ENCODE measurements at regions of chr20 and their contacts with region 1.

Region 1: GRCh38 chr20:38875175-38875993 is 50.8 kb upstream of the FAM83D start:
- DNase-seq: peak; percentile 73
- H3K4me3 Mint-ChIP-seq: peak overlapping the region; percentile 69
- H3K27ac Mint-ChIP-seq: peak overlapping the region; percentile 94
- H3K4me1 Mint-ChIP-seq: peaks cover 88% of the 10 kb centered on the region
- H3K27me3 Mint-ChIP-seq: no peaks in the 10 kb centered on the region

Region 2: GRCh38 chr20:38498909-38499308 is 376.5 kb before region 1 on chr20:
- CTCF ChIA-PET with region 1: no interaction called
- POLR2A ChIA-PET with region 1: no interaction called
- intact Hi-C with region 1: no loop called
- DNase-seq: no peak
- H3K4me3 Mint-ChIP-seq: no peak overlapping the region
- H3K27ac Mint-ChIP-seq: no peak overlapping the region
- H3K4me1 Mint-ChIP-seq: no peaks in the 10 kb centered on the region
- H3K27me3 Mint-ChIP-seq: no peaks in the 10 kb centered on the region

Region 3: DNA sequence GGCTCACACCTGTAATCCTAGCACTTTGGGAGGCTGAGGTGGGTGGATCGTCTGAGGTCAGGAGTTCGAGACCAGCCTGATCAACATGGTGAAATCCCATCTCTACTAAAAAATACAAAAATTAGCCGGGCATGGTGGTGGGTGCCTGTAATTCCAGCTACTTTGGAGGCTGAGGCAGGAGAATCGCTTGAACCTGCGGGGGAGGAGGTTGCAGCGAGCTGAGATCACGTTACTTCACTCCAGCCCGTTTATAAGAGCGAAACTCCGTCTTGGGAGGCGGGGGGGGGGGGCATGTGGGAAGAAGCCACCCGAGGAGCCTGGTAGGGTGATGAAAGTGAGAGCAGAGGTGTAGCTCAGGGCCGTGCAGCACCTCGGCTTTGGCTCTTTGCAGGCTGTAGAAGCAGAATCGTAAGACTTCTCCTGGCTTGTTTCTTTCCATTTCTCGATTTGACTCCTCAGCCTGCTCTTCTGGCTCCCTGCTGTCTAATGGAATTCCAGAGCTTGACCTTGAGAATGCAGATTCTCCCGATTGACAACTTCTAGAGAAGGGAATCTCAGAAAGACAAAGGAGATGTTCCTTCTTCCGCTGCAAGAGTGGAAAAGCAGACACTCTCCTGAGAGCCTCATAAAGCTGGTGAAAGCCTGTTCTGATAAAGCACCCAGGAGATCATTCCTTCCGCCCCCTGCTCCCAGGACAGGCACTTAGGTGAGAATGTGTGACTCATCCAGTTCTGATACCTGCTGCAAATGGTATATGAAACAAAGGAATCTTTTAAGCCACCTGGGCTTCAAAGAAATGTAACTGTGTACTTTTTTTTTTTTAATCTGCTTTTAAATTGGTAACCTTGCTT is 95.9 kb before region 1 on chr20:
- CTCF ChIA-PET with region 1: no interaction called
- POLR2A ChIA-PET with region 1: no interaction called
- intact Hi-C with region 1: no loop called
- DNase-seq: peak; percentile 31
- H3K4me3 Mint-ChIP-seq: peak overlapping the region; percentile 27
- H3K27ac Mint-ChIP-seq: peak overlapping the region; percentile 19
- H3K4me1 Mint-ChIP-seq: peaks cover 11% of the 10 kb centered on the region
- H3K27me3 Mint-ChIP-seq: no peaks in the 10 kb centered on the region

Region 4: DNA sequence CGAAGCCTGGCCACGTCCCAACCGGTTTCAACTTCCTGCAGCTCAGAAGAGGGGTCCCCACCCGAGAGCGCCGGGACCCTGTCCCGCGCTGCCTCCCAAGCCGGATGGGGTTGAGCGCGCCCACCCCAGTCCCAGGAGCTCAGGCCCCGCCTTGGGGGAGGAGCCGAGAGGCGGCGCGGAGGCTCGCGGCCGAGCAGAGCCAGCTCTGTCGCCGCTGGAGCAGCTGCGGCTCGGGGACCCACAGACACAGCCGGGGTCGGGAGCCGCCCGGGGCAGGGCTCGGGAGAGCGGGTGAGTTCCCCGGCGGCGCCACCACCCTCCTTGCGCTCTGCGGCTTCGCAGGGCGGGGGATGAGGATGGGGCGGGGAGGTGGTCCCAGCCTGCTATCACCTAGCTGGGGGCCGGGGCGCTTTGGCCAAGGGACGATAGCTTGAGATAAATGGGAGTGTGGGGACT is 69.9 kb before region 1 on chr20 and contains the start of gene PPP1R16B:
- CTCF ChIA-PET with region 1: interaction called, 7 read pairs
- POLR2A ChIA-PET with region 1: interaction called, 36 read pairs
- intact Hi-C with region 1: loop called (anchors 1 kb)
- DNase-seq: peak; percentile 85
- H3K4me3 Mint-ChIP-seq: peak within 1 kb of the TSS; percentile 86
- H3K27ac Mint-ChIP-seq: peak within 1 kb of the TSS; percentile 96
- H3K4me1 Mint-ChIP-seq: peaks cover 51% of the 10 kb centered on the region
- H3K27me3 Mint-ChIP-seq: no peaks in the 10 kb centered on the region
- total RNA-seq, gene PPP1R16B: 111 to 114 TPM

Region 5: GRCh38 chr20:38833857-38834164 is 41.6 kb before region 1 on chr20:
- CTCF ChIA-PET with region 1: interaction called, 4 read pairs
- POLR2A ChIA-PET with region 1: interaction called, 5 read pairs
- intact Hi-C with region 1: loop called (anchors 1 kb)
- DNase-seq: peak; percentile 72
- H3K4me3 Mint-ChIP-seq: peak overlapping the region; percentile 43
- H3K27ac Mint-ChIP-seq: peak overlapping the region; percentile 92
- H3K4me1 Mint-ChIP-seq: peaks cover 80% of the 10 kb centered on the region
- H3K27me3 Mint-ChIP-seq: no peaks in the 10 kb centered on the region

Region 6: DNA sequence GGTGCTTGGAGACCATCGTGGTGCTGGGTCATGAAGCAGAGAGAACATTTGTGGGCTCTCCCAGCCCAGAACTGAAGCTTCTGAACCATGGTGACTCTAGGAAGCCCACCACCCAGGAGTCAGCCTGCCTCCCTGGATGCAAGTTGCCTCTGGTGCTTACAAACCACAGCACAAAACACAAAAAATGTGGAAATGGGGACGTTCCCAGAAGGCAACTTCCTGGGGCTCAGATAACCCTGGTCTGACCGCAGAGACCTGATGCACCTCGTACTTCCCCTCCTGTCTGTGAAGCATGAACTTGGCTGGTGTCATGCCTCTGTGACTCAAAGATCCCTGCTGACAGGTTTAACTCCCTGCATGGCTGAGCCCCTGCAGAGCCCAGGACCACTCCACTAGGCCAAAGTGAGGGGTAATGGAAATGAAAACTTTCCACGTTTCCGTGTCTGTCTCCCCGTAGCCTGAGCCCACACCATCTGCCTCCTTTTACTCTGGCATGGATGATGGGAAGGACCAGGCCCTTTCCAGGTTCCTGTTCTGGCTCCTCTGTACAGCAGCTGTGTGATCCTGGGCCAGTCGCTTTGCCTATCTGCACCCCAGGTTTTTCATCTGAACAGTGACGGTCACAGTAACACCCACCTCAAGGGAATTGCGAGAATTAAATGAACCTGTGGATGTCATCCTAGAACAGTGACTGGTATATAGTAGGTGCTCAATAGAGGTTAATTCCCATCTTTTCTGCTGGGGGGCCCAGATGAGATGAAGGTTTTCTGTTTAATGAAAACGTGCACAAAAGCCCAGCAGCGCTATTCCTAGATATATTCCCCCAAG is 12.1 kb before region 1 on chr20:
- CTCF ChIA-PET with region 1: interaction called, 3 read pairs
- POLR2A ChIA-PET with region 1: interaction called, 12 read pairs
- intact Hi-C with region 1: loop called (anchors 1 kb)
- DNase-seq: peak; percentile 85
- H3K4me3 Mint-ChIP-seq: peak overlapping the region; percentile 35
- H3K27ac Mint-ChIP-seq: peak overlapping the region; percentile 89
- H3K4me1 Mint-ChIP-seq: peaks cover 66% of the 10 kb centered on the region
- H3K27me3 Mint-ChIP-seq: no peaks in the 10 kb centered on the region

Region 7: DNA sequence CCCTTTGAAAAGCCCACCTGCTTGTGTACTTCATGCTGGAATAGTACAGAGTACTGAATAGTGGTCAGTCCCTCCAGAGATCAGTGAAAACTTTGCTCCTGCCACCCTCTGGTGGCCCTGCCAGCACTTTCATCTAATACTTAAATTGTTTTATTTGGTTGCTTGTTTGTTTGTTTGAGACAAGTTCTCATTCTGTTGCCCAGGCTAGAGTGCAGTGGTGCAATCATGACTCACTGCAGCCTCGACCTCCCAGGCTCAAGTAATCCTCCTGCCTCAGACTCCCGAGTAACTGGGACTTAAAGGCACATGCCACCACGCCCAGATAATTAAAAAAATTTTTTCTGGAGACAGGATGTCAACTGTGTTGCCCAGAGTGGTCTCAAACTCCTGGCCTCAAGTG is 59.9 kb after region 1 on chr20:
- CTCF ChIA-PET with region 1: no interaction called
- POLR2A ChIA-PET with region 1: no interaction called
- intact Hi-C with region 1: no loop called
- DNase-seq: no peak
- H3K4me3 Mint-ChIP-seq: no peak overlapping the region
- H3K27ac Mint-ChIP-seq: no peak overlapping the region
- H3K4me1 Mint-ChIP-seq: no peaks in the 10 kb centered on the region
- H3K27me3 Mint-ChIP-seq: no peaks in the 10 kb centered on the region